ENCODE measurements at regions of chr2 and their contacts with region 1.

Region 1: GRCh38 chr2:240913810-240914644 is 7.9 kb downstream of the CROCC2 start:
- DNase-seq: peak; percentile 34 to 99
- H3K4me3 ChIP-seq: no peak overlapping the region
- H3K27ac ChIP-seq: no peak overlapping the region
- H3K4me1 ChIP-seq: peaks cover 0 to 6% (median 3%) of the 10 kb centered on the region in 4 experiments; a peak in 4 of 7 replicates
- H3K27me3 ChIP-seq: peaks cover 1 to 9% (median 9%) of the 10 kb centered on the region in 4 experiments; a peak in 6 of 7 replicates
- CTCF ChIP-seq: peak in 2 of 3 experiments; percentile 88 to 94; a peak in 3 of 4 replicates
- EP300 ChIP-seq: no peak
- POLR2A ChIP-seq: no peak
- RAD21 ChIP-seq: peak; percentile 87 to 90

Region 2: DNA sequence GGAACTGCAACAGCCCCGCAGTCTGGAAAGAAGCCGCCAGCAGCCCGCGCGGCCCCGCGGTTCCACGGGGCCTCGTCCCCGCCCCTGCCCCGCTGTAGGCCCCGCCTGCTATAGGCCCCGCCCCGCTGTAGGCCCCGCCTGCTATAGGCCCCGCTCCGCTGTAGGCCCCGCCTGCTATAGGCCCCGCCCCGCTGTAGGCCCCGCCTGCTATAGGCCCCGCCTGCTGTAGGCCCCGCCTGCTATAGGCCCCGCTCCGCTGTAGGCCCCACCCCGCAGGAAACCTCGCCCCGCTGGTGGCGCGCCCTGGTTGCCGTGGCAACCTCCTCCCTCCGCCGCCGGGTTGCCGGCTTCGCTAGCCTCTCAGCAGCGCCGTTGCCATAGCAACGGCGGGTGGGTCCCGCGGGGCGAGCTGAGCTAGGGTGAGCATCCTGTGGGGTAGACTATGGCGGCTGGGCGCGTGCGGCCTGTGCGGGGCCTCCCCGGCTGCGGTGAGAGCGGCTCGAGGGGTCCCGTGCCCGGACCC is 81.8 kb before region 1 on chr2:
- CTCF ChIA-PET with region 1: no interaction called
- POLR2A ChIA-PET with region 1: no interaction called
- DNase-seq: peak; percentile 91 to 98
- H3K4me3 ChIP-seq: peak overlapping the region; percentile 53 to 72 (median 60); a peak in 7 of 8 replicates
- H3K27ac ChIP-seq: no peak overlapping the region
- H3K4me1 ChIP-seq: peaks cover 0 to 2% (median 0%) of the 10 kb centered on the region in 4 experiments; a peak in 1 of 7 replicates
- H3K27me3 ChIP-seq: peaks cover 0 to 17% (median 12%) of the 10 kb centered on the region in 4 experiments; a peak in 5 of 7 replicates
- CTCF ChIP-seq: no peak
- EP300 ChIP-seq: no peak
- POLR2A ChIP-seq: no peak
- RAD21 ChIP-seq: no peak

Region 3: GRCh38 chr2:240888130-240888889 is 25.7 kb before region 1 on chr2:
- CTCF ChIA-PET with region 1: interaction called, 26 read pairs
- POLR2A ChIA-PET with region 1: no interaction called
- DNase-seq: no peak
- H3K4me3 ChIP-seq: no peak overlapping the region
- H3K27ac ChIP-seq: no peak overlapping the region
- H3K4me1 ChIP-seq: peaks cover 0 to under 1% (median 0%) of the 10 kb centered on the region in 4 experiments; a peak in 2 of 7 replicates
- H3K27me3 ChIP-seq: no peaks in the 10 kb centered on the region
- CTCF ChIP-seq: peak in 2 of 3 experiments; percentile 15 to 34; a peak in 3 of 4 replicates
- EP300 ChIP-seq: no peak
- POLR2A ChIP-seq: no peak
- RAD21 ChIP-seq: peak in 1 of 2 experiments; percentile 8; a peak in 1 of 4 replicates

Region 4: GRCh38 chr2:240898108-240898730 is 15.8 kb before region 1 on chr2:
- CTCF ChIA-PET with region 1: interaction called, 20 read pairs
- POLR2A ChIA-PET with region 1: no interaction called
- DNase-seq: no peak
- H3K4me3 ChIP-seq: no peak overlapping the region
- H3K27ac ChIP-seq: no peak overlapping the region
- H3K4me1 ChIP-seq: 0 out of 7 replicates have a peak, but pooled peaks cover 0 to 2% (median 0%) of the 10 kb centered on the region in 4 experiments
- H3K27me3 ChIP-seq: no peaks in the 10 kb centered on the region
- CTCF ChIP-seq: no peak
- EP300 ChIP-seq: no peak
- POLR2A ChIP-seq: no peak
- RAD21 ChIP-seq: no peak

Region 5: GRCh38 chr2:240933048-240933965 is 19.3 kb after region 1 on chr2:
- CTCF ChIA-PET with region 1: interaction called, 16 read pairs
- POLR2A ChIA-PET with region 1: no interaction called
- DNase-seq: peak in 1 of 2 experiments; percentile 41
- H3K4me3 ChIP-seq: no peak overlapping the region
- H3K27ac ChIP-seq: no peak overlapping the region
- H3K4me1 ChIP-seq: no peaks in the 10 kb centered on the region
- H3K27me3 ChIP-seq: no peaks in the 10 kb centered on the region
- CTCF ChIP-seq: no peak
- EP300 ChIP-seq: no peak
- POLR2A ChIP-seq: no peak
- RAD21 ChIP-seq: no peak

Region 6: GRCh38 chr2:240989451-240990265 is 75.6 kb after region 1 on chr2:
- CTCF ChIA-PET with region 1: interaction called, 15 read pairs
- POLR2A ChIA-PET with region 1: no interaction called
- DNase-seq: peak in 1 of 2 experiments; percentile 48
- H3K4me3 ChIP-seq: no peak overlapping the region
- H3K27ac ChIP-seq: no peak overlapping the region
- H3K4me1 ChIP-seq: no peaks in the 10 kb centered on the region; a peak in 1 of 7 replicates
- H3K27me3 ChIP-seq: no peaks in the 10 kb centered on the region
- CTCF ChIP-seq: peak in 2 of 3 experiments; percentile 56 to 81; a peak in 3 of 4 replicates
- EP300 ChIP-seq: no peak
- POLR2A ChIP-seq: no peak
- RAD21 ChIP-seq: peak; percentile 40 to 56

Region 7: DNA sequence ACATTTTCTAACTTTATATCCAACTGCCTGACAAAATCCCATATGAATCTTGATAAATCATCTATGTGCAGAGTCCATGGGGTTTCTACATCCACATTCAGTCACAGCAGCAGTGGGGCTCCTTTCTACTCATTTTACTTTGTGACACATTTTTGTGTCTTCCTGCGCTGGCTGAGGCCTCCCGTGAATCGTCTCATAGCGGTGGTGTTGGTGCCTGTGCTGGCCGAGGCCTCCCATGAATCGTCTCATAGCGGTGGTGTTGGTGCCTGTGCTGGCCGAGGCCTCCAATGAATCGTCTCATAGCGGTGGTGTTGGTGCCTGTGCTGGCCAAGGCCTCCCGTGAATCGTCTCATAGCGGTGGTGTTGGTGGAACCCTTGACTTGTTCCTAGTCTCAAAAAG is 101.4 kb after region 1 on chr2:
- CTCF ChIA-PET with region 1: no interaction called
- POLR2A ChIA-PET with region 1: no interaction called
- DNase-seq: no peak
- H3K4me3 ChIP-seq: no peak overlapping the region
- H3K27ac ChIP-seq: no peak overlapping the region
- H3K4me1 ChIP-seq: peaks cover 0 to 4% (median 4%) of the 10 kb centered on the region in 4 experiments; a peak in 6 of 7 replicates
- H3K27me3 ChIP-seq: no peaks in the 10 kb centered on the region
- CTCF ChIP-seq: no peak
- EP300 ChIP-seq: no peak
- POLR2A ChIP-seq: no peak
- RAD21 ChIP-seq: no peak

Measured in H1 (cell line).